ENCODE measurements at regions of chr5 and their contacts with region 1.

Region 1: GRCh38 chr5:126745259-126745992 is 31.5 kb upstream of the LMNB1 start:
- DNase-seq: no peak
- H3K4me3 Mint-ChIP-seq: no peak overlapping the region
- H3K27ac Mint-ChIP-seq: peak overlapping the region; percentile 24
- H3K4me1 Mint-ChIP-seq: peaks cover 41% of the 10 kb centered on the region
- H3K27me3 Mint-ChIP-seq: no peaks in the 10 kb centered on the region

Region 2: GRCh38 chr5:126253406-126253805 is 492.0 kb before region 1 on chr5:
- CTCF ChIA-PET with region 1: no interaction called
- intact Hi-C with region 1: no loop called
- DNase-seq: no peak
- H3K4me3 Mint-ChIP-seq: no peak overlapping the region
- H3K27ac Mint-ChIP-seq: no peak overlapping the region
- H3K4me1 Mint-ChIP-seq: no peaks in the 10 kb centered on the region
- H3K27me3 Mint-ChIP-seq: no peaks in the 10 kb centered on the region

Region 3: GRCh38 chr5:126624534-126624933 is 120.9 kb before region 1 on chr5:
- CTCF ChIA-PET with region 1: no interaction called
- intact Hi-C with region 1: no loop called
- DNase-seq: peak; percentile 52
- H3K4me3 Mint-ChIP-seq: no peak overlapping the region
- H3K27ac Mint-ChIP-seq: peak overlapping the region; percentile 76
- H3K4me1 Mint-ChIP-seq: peaks cover 15% of the 10 kb centered on the region
- H3K27me3 Mint-ChIP-seq: no peaks in the 10 kb centered on the region

Region 4: DNA sequence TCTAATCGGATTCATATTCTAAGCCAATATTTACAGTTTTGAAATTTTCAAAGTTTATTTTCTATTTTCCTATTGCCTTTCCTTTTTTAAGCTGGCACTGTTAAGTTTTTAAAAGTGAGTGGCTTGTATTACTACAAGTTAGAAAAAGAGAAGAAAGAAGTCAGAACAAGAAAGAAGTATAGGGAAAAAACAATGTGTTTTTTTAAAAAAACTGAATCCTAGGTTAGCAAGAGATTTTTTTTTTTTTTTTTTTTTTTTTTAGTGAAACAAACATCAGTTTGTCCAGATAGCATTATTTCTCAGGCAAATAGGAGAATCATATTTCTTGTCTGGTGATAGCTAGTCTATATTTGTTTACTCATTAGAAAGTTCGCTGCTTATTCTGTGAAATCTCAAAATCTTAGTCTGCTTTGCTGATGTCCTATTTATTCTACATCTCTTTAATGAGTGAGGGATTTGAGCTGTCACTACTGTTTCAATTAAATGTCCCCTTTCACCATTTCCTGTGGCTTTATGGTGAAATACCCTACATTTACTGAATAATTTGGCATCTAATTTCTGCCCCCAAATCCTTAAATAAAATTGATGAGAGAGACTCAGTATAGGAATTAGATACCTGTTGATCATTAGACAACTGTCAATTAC is 12.4 kb after region 1 on chr5:
- CTCF ChIA-PET with region 1: interaction called, 3 read pairs
- intact Hi-C with region 1: loop called (anchors 1 kb)
- DNase-seq: no peak
- H3K4me3 Mint-ChIP-seq: no peak overlapping the region
- H3K27ac Mint-ChIP-seq: peak overlapping the region; percentile 54
- H3K4me1 Mint-ChIP-seq: peaks cover 44% of the 10 kb centered on the region
- H3K27me3 Mint-ChIP-seq: no peaks in the 10 kb centered on the region

Region 5: GRCh38 chr5:126794157-126794828 is 48.9 kb after region 1 on chr5:
- CTCF ChIA-PET with region 1: no interaction called
- intact Hi-C with region 1: no loop called
- DNase-seq: no peak
- H3K4me3 Mint-ChIP-seq: no peak overlapping the region
- H3K27ac Mint-ChIP-seq: no peak overlapping the region
- H3K4me1 Mint-ChIP-seq: peaks cover 49% of the 10 kb centered on the region
- H3K27me3 Mint-ChIP-seq: no peaks in the 10 kb centered on the region

Region 6: DNA sequence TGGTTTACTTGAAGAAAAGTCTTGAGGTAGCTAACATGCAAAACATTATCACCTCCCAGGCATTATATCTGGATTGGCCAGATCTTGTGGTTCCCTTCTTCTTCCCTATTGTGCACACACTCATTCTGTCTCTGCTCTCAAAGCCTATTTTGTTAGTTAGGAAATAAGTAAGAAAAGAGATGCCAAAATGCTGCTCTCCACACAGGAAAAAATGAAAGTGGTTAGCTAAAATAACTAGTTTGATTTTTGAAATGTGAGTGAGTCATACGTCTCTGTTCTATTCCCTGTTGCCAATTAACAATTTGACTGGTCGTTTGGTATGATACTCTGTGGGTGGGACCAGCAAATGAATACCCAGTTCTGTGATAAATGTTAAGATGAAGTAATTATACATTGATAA is 59.6 kb after region 1 on chr5:
- CTCF ChIA-PET with region 1: no interaction called
- intact Hi-C with region 1: no loop called
- DNase-seq: no peak
- H3K4me3 Mint-ChIP-seq: no peak overlapping the region
- H3K27ac Mint-ChIP-seq: peak overlapping the region; percentile 78
- H3K4me1 Mint-ChIP-seq: peaks cover 44% of the 10 kb centered on the region
- H3K27me3 Mint-ChIP-seq: no peaks in the 10 kb centered on the region

Region 7: GRCh38 chr5:127785098-127785927 is 1039.9 kb after region 1 on chr5:
- CTCF ChIA-PET with region 1: no interaction called
- intact Hi-C with region 1: loop called (anchors 5 kb)
- DNase-seq: peak; percentile 36
- H3K4me3 Mint-ChIP-seq: no peak overlapping the region
- H3K27ac Mint-ChIP-seq: peak overlapping the region; percentile 62
- H3K4me1 Mint-ChIP-seq: no peaks in the 10 kb centered on the region
- H3K27me3 Mint-ChIP-seq: peaks cover 23% of the 10 kb centered on the region